Calu3 (cell line): ENCODE measurements at regions of chr1 and their contacts with region 1.

Region 1: GRCh38 chr1:158248118-158248517 is 6.1 kb upstream of the CD1A start:
- DNase-seq: no peak
- H3K4me3 Mint-ChIP-seq: no peak overlapping the region
- H3K27ac Mint-ChIP-seq: no peak overlapping the region
- H3K4me1 Mint-ChIP-seq: no peaks in the 10 kb centered on the region
- H3K27me3 Mint-ChIP-seq: peaks cover 42% of the 10 kb centered on the region
- CTCF ChIP-seq: no peak

Region 2: DNA sequence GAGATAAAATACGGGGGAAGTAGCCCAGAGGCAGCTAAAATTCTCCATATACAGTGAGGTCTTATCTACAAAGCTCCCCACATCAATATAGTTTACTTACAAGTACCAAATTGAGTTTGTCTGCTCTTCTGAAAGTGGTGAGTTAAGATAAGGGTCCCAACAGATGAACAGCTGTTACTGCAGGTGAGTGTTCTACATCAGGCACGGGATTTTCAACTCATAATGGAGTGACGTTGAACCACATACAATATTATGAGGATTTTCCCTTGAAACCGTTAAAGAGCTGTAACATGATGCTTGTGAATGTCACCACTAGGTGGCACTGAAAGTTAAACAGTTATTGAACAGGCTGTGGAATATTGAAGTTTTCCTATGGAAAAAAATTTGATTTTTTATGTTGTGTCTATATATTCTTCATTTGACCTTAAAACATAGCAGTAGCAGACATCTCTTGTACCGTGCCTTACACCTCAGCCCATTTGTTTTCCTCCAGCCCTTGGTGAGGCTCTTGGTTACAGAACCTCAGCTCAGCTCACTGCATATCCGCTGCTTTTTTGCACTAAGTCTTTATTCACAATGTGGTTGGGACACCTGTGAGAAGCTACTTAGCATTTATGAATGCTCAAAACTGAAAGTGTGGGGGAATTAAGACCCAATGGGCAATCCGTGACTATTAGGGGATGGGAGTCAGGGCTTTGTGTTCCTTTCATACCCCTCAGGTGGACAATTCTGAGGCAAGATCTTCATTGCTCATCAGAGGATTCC is 44.2 kb before region 1 on chr1:
- CTCF ChIA-PET with region 1: no interaction called
- intact Hi-C with region 1: no loop called
- DNase-seq: peak; percentile 41
- H3K4me3 Mint-ChIP-seq: no peak overlapping the region
- H3K27ac Mint-ChIP-seq: no peak overlapping the region
- H3K4me1 Mint-ChIP-seq: peaks cover 22% of the 10 kb centered on the region
- H3K27me3 Mint-ChIP-seq: peaks cover 17% of the 10 kb centered on the region
- CTCF ChIP-seq: peak; percentile 64

Region 3: DNA sequence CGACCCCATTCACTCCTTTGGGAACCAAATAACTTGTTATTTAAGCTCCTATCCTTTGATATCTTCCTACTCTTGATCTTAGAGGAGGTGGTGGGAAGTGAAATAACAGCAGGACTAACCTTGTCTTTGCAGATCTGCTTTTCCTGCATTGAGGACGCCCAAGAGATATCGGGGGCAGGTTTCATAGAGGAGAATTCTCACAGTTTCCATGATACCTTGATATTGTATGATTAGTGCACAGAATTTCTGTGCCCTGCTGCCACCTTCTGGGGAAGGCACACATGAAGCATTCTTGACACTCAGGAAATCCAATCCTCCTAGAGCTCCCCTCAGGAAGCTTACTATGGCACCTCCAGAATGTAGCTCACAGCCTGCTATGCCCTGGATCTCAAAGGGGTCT is 81.6 kb after region 1 on chr1:
- CTCF ChIA-PET with region 1: no interaction called
- intact Hi-C with region 1: loop called (anchors 10 kb)
- DNase-seq: peak; percentile 29
- H3K4me3 Mint-ChIP-seq: no peak overlapping the region
- H3K27ac Mint-ChIP-seq: no peak overlapping the region
- H3K4me1 Mint-ChIP-seq: no peaks in the 10 kb centered on the region
- H3K27me3 Mint-ChIP-seq: no peaks in the 10 kb centered on the region
- CTCF ChIP-seq: no peak

Region 4: DNA sequence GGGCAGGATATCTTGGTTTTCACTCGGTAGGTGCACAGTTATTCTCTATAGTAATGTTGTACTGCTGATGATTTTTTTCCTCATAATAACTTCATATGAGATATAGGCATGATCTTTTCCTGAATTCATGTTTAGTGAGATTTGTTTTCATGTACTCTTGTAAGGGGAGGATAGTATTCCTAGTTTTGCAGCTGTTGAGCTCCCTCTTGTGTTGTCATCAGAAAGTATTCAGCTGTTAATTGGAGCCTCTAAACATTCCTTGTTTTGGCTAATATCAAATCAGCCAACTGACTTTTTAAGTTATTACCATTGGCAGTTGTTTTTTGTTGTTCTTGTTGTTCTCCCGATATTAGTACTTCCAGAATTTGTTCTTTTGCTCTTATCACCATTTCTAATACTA is 248.3 kb after region 1 on chr1:
- CTCF ChIA-PET with region 1: no interaction called
- intact Hi-C with region 1: loop called (anchors 5 kb)
- DNase-seq: no peak
- H3K4me3 Mint-ChIP-seq: no peak overlapping the region
- H3K27ac Mint-ChIP-seq: no peak overlapping the region
- H3K4me1 Mint-ChIP-seq: no peaks in the 10 kb centered on the region
- H3K27me3 Mint-ChIP-seq: peaks cover 15% of the 10 kb centered on the region
- CTCF ChIP-seq: no peak

Region 5: GRCh38 chr1:158998781-158999161 is 750.7 kb after region 1 on chr1:
- CTCF ChIA-PET with region 1: no interaction called
- intact Hi-C with region 1: loop called (anchors 2 kb)
- DNase-seq: peak; percentile 51
- H3K4me3 Mint-ChIP-seq: peak overlapping the region; percentile 63
- H3K27ac Mint-ChIP-seq: peak overlapping the region; percentile 38
- H3K4me1 Mint-ChIP-seq: peaks cover 29% of the 10 kb centered on the region
- H3K27me3 Mint-ChIP-seq: no peaks in the 10 kb centered on the region
- CTCF ChIP-seq: peak; percentile 83